ENCODE measurements at regions of chr5 and their contacts with region 1.

Region 1: DNA sequence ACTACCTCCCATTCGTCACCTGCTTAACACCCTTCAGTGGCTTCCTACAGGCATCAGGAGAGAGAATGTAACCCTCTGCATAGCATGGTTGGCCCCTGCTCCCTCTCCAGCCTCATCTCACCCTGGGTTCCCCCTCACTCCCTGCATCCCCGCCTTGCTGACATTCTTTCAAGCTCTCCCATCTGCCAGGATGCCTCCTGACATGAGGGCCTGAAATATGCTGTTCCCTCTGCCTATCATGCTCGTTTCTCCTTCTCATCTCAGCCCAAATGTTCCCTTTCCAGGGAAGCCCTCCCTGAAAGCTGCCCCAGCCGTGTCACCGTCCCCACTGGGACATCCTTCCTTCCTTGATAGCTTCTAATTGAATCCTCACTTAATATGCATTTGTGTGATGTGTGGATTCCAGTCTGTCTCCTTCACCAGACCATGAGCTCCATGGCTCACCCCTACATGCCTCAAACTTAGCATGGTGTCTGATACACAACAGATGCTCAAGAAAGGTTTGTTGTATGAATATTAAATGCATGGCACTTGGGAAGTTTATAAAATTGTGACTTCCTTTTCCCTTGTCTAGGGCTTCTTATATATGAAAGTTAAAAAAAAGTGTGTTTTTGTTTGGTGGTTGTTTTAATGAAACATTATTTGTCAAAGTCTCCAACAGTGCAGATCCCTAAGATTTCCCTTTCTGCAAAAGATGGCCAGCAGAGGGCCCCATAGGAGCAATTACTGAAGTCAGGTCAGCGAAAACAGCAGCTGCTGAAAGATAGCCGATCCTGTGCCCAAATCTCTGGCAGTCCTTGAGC is 7.3 kb upstream of the C5orf58 start:
- DNase-seq: peak; percentile 91
- H3K4me3 Mint-ChIP-seq: no peak overlapping the region
- H3K27ac Mint-ChIP-seq: no peak overlapping the region
- H3K4me1 Mint-ChIP-seq: peaks cover 7% of the 10 kb centered on the region
- H3K27me3 Mint-ChIP-seq: no peaks in the 10 kb centered on the region

Region 2: GRCh38 chr5:170235876-170236864 is 10.6 kb after region 1 on chr5:
- CTCF ChIA-PET with region 1: interaction called, 36 read pairs
- intact Hi-C with region 1: no loop called
- DNase-seq: no peak
- H3K4me3 Mint-ChIP-seq: no peak overlapping the region
- H3K27ac Mint-ChIP-seq: no peak overlapping the region
- H3K4me1 Mint-ChIP-seq: peaks cover 12% of the 10 kb centered on the region
- H3K27me3 Mint-ChIP-seq: no peaks in the 10 kb centered on the region

Region 3: GRCh38 chr5:170247363-170247762 is 21.8 kb after region 1 on chr5:
- CTCF ChIA-PET with region 1: interaction called, 13 read pairs
- intact Hi-C with region 1: no loop called
- DNase-seq: no peak
- H3K4me3 Mint-ChIP-seq: no peak overlapping the region
- H3K27ac Mint-ChIP-seq: peak overlapping the region; percentile 54
- H3K4me1 Mint-ChIP-seq: peaks cover 34% of the 10 kb centered on the region
- H3K27me3 Mint-ChIP-seq: no peaks in the 10 kb centered on the region

Region 4: DNA sequence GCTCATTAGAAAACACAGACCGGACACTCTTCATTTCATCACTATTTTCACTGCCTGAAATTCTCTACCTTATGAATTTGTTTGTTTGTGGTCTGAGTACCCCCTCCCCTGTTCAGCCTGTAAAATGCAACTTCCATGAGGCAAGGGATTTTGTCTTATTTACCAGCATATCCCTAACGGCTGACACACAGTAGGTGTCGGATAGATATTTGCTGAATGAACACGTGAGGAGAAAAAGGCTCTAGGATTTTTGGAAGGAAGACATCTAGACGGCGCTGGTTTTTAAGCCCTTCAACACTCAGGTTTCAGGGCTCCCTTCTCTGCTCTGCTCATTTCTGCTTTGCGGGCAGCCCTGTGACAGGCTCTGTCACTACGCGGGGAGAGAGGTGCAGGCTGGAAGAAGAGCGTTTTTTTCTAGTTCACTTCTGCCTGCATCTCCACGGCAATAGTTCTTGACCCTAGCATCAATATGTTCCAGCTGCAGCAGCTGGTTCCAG is 122.7 kb after region 1 on chr5:
- CTCF ChIA-PET with region 1: interaction called, 165 read pairs
- intact Hi-C with region 1: no loop called
- DNase-seq: no peak
- H3K4me3 Mint-ChIP-seq: no peak overlapping the region
- H3K27ac Mint-ChIP-seq: no peak overlapping the region
- H3K4me1 Mint-ChIP-seq: no peaks in the 10 kb centered on the region
- H3K27me3 Mint-ChIP-seq: peaks cover 7% of the 10 kb centered on the region

Region 5: DNA sequence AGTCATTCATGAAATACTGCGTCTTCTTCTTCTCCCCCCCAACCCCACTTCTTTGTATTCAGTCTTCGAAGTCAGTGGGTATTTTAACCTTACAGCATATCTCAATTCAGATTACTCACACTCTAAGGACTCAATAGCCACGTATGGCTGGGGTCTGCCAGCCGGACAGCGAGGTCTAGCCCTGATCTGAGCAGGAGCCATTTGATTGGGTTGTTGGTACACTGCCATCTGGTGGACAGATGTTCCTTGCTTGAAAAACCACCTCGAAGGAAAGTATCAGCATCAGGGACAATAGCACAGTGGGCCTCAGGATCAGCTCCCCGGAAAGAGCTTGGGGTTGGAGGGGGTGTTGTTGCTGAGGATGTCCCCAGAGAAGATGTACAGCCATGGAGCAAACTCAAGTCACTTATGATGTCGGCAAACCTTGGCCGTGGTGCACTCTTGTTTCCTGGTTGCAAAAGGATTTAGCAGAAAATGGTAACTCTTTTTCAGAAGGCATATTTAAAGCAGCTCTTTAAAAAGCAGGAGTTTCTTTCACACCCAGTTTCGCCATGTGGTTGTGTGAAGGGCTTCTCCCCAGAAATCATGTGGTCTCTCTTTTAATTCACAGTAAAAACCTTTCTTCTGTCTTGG is 195.4 kb after region 1 on chr5:
- CTCF ChIA-PET with region 1: interaction called, 105 read pairs
- intact Hi-C with region 1: loop called (anchors 1 kb)
- DNase-seq: peak; percentile 71
- H3K4me3 Mint-ChIP-seq: no peak overlapping the region
- H3K27ac Mint-ChIP-seq: no peak overlapping the region
- H3K4me1 Mint-ChIP-seq: peaks cover 15% of the 10 kb centered on the region
- H3K27me3 Mint-ChIP-seq: no peaks in the 10 kb centered on the region

Measured in activated naive CD4-positive, alpha-beta T cell treated with anti-CD3 and anti-CD28 coated beads for 36 hours (primary cell).